ENCODE measurements at regions of chr17 and their contacts with region 1.

Region 1: DNA sequence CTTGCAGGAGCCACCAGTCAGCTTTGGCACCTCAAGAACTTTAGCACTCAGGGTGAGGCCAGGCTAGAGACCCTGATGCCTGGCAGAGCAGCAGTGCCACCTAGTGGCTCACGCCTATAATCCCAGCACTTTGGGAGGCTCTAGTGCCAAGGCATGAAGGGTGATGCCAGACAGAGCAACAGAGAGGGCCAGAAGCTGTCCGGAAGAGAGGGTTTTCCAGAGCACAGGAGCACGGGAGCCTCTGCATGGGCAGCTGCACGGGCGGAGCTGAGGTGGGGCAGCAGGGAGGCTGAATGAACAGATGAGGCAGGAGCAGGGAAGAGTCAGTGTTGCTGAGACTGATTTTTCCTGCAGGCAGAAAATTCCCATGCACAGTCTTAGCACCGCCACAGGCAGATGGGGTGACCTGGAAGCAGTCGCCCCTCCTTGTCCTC is 38.9 kb downstream of the MYH3 start:
- DNase-seq: peak; percentile 56 to 78 (median 64)
- H3K4me3 ChIP-seq: no peak overlapping the region
- H3K27ac ChIP-seq: no peak overlapping the region
- H3K4me1 ChIP-seq: no peaks in the 10 kb centered on the region
- H3K27me3 ChIP-seq: no peaks in the 10 kb centered on the region
- CTCF ChIP-seq: peak; percentile 47 to 80 (median 66)
- POLR2A ChIP-seq: no peak

Region 2: DNA sequence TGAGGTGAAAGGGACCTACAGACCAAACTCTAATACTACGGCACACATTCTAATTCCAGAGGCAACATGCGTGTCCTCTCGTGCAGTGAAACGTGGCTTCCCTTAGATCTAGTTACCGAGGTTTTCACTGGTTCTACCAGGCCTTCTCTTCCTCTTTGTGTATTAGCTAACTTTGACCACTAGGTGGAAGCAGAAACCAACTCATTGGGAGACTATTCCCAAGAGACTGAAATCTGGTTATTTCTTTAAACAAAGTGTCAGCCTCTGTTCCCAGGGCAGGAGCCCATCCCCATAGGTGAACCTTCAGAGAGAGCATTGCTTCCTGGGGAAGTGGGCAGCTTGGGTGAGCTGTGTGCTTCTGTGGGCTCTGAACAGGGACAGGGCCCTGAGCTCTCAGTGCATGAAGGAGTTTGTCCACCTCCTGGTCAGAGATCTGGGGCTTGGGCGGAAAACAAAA is 693.5 kb before region 1 on chr17:
- intact Hi-C with region 1: loop called (anchors 5 to 10 kb)
- DNase-seq: peak in 3 of 7 donors; percentile 20 to 54 (median 26)
- H3K4me3 ChIP-seq: no peak overlapping the region
- H3K27ac ChIP-seq: no peak overlapping the region
- H3K4me1 ChIP-seq: no peaks in the 10 kb centered on the region
- H3K27me3 ChIP-seq: no peaks in the 10 kb centered on the region
- CTCF ChIP-seq: peak; percentile 79 to 91 (median 84)
- POLR2A ChIP-seq: no peak

Region 3: DNA sequence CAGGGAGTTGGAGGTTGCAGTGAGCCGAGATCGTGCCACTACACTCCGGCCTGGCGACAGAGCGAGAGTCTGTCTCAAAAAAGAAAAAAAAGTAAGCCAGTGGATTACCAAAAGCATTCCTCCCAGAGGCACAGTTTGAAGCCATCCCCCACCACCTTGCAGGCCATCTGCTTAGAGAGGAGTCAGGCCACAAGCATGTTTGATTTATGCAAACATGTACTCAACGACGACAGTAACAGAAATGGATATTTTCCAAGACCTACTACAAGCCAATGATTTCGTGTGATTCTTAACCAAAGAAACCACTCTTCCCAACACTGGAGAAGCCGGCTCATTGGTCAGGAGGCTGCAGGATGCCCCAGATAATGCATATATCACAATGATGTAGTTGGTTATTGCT is 280.2 kb before region 1 on chr17:
- intact Hi-C with region 1: loop called (anchors 10 kb)
- DNase-seq: no peak
- H3K4me3 ChIP-seq: no peak overlapping the region
- H3K27ac ChIP-seq: no peak overlapping the region
- H3K4me1 ChIP-seq: no peaks in the 10 kb centered on the region
- H3K27me3 ChIP-seq: no peaks in the 10 kb centered on the region
- CTCF ChIP-seq: no peak
- POLR2A ChIP-seq: no peak

Region 4: GRCh38 chr17:10698096-10698818 is 80.0 kb after region 1 on chr17:
- intact Hi-C with region 1: no loop called
- DNase-seq: peak in 1 of 7 donors; percentile 8
- H3K4me3 ChIP-seq: peak overlapping the region; percentile 68 to 84 (median 76)
- H3K27ac ChIP-seq: peak overlapping the region; percentile 49 to 95 (median 91)
- H3K4me1 ChIP-seq: peaks cover 7 to 20% of the 10 kb centered on the region in 2 donors
- H3K27me3 ChIP-seq: no peaks in the 10 kb centered on the region
- CTCF ChIP-seq: no peak
- POLR2A ChIP-seq: no peak

Measured in adrenal gland (tissue), 19 donors.